Sigmoid colon (tissue), 7 donors: ENCODE measurements at regions of chr7 and their contacts with region 1.

Region 1: GRCh38 chr7:134778941-134779740 is at the start of gene CALD1:
- DNase-seq: peak; percentile 96
- H3K4me3 ChIP-seq: peak within 1 kb of the TSS; percentile 52 to 66 (median 66)
- H3K27ac ChIP-seq: peak within 1 kb of the TSS; percentile 91 to 94 (median 93)
- H3K4me1 ChIP-seq: peaks cover 0 to 39% (median 22%) of the 10 kb centered on the region in 4 donors
- H3K27me3 ChIP-seq: no peaks in the 10 kb centered on the region
- CTCF ChIP-seq: no peak
- EP300 ChIP-seq: peak; percentile 35 to 88 (median 80)
- POLR2A ChIP-seq: peak; percentile 84 to 97
- total RNA-seq, gene CALD1: 1,069 to 2,150 (median 1,500) TPM

Region 2: DNA sequence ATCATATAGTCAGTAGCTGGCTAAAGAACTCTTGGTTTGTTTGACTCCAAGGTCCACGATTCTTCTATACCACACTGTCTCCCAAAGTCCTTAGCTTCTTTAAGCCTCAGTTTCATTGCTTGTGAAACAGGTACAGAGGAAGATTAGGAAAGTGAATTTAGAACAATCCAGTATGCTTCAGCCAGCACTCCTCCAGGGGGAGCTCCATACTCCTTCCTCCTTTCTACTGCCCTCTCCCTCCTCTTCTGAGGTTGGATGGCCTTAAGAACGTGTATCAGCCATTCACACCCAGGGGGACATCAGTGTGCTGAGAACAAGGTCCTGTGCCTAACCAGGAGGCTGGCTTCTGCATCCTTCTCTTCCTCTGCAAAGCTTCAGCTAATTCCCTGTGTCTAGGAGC is 54.5 kb before region 1 on chr7:
- intact Hi-C with region 1: loop called (anchors 5 kb)
- DNase-seq: no peak
- H3K4me3 ChIP-seq: no peak overlapping the region
- H3K27ac ChIP-seq: peak overlapping the region; percentile 72 to 87 (median 78)
- H3K4me1 ChIP-seq: peaks cover 0 to 76% (median 64%) of the 10 kb centered on the region in 4 donors
- H3K27me3 ChIP-seq: no peaks in the 10 kb centered on the region
- CTCF ChIP-seq: peak in 1 of 4 experiments; percentile 32
- EP300 ChIP-seq: no peak
- POLR2A ChIP-seq: no peak

Region 3: GRCh38 chr7:134834689-134835462 is 55.7 kb after region 1 on chr7:
- intact Hi-C with region 1: loop called (anchors 2 kb)
- DNase-seq: peak; percentile 81
- H3K4me3 ChIP-seq: no peak overlapping the region
- H3K27ac ChIP-seq: peak overlapping the region; percentile 80 to 94 (median 83)
- H3K4me1 ChIP-seq: peaks cover 0 to 96% (median 77%) of the 10 kb centered on the region in 4 donors
- H3K27me3 ChIP-seq: no peaks in the 10 kb centered on the region
- CTCF ChIP-seq: no peak
- EP300 ChIP-seq: no peak
- POLR2A ChIP-seq: no peak

Region 4: DNA sequence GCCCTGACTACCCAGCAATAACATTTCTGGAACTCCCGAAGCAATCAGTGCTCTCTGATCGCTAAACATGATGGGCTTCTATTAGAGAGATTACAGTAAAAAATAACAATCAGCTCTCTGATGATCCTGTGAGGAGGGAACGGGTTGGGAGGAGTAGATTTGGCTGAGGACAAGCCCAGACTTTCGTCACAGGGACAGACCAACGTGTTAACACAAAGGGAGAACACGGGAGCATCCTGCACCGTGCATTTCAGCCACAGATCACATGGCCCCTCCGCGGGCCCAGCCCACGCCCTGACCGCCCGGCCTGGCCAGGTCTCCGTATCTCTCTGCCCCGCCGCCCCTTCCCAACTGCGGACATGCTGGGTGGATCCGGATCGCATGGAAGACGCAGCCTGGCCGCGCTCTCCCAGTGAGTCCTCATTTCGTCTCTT is 112.1 kb after region 1 on chr7:
- intact Hi-C with region 1: loop called (anchors 5 kb)
- DNase-seq: peak; percentile 94
- H3K4me3 ChIP-seq: peak overlapping the region; percentile 30 to 41 (median 40)
- H3K27ac ChIP-seq: peak overlapping the region; percentile 78 to 88 (median 80)
- H3K4me1 ChIP-seq: peaks cover 0 to 79% (median 66%) of the 10 kb centered on the region in 4 donors
- H3K27me3 ChIP-seq: no peaks in the 10 kb centered on the region
- CTCF ChIP-seq: no peak
- EP300 ChIP-seq: peak in 2 of 4 donors; percentile 50 to 56
- POLR2A ChIP-seq: no peak

Region 5: GRCh38 chr7:134932707-134933370 is 153.7 kb after region 1 on chr7:
- intact Hi-C with region 1: loop called (anchors 1 kb)
- DNase-seq: peak; percentile 82
- H3K4me3 ChIP-seq: peak overlapping the region in 1 of 4 donors; percentile 8
- H3K27ac ChIP-seq: peak overlapping the region; percentile 69 to 86 (median 84)
- H3K4me1 ChIP-seq: peaks cover 0 to 70% (median 40%) of the 10 kb centered on the region in 4 donors
- H3K27me3 ChIP-seq: no peaks in the 10 kb centered on the region
- CTCF ChIP-seq: no peak
- EP300 ChIP-seq: no peak
- POLR2A ChIP-seq: no peak

Region 6: GRCh38 chr7:134986363-134987251 is 207.5 kb after region 1 on chr7 and contains the start of gene AGBL3:
- intact Hi-C with region 1: loop called (anchors 2 kb)
- DNase-seq: peak; percentile 99
- H3K4me3 ChIP-seq: peak within 1 kb of the TSS; percentile 63 to 83 (median 73)
- H3K27ac ChIP-seq: peak within 1 kb of the TSS; percentile 89 to 93 (median 92)
- H3K4me1 ChIP-seq: peaks cover 0 to 18% (median 11%) of the 10 kb centered on the region in 4 donors
- H3K27me3 ChIP-seq: no peaks in the 10 kb centered on the region
- CTCF ChIP-seq: peak; percentile 55 to 75 (median 64)
- EP300 ChIP-seq: peak in 1 of 4 donors; percentile 50
- POLR2A ChIP-seq: peak in 1 of 2 donors; percentile 39
- total RNA-seq, gene AGBL3: 0.95 to 3.1 (median 1.1) TPM

Region 7: DNA sequence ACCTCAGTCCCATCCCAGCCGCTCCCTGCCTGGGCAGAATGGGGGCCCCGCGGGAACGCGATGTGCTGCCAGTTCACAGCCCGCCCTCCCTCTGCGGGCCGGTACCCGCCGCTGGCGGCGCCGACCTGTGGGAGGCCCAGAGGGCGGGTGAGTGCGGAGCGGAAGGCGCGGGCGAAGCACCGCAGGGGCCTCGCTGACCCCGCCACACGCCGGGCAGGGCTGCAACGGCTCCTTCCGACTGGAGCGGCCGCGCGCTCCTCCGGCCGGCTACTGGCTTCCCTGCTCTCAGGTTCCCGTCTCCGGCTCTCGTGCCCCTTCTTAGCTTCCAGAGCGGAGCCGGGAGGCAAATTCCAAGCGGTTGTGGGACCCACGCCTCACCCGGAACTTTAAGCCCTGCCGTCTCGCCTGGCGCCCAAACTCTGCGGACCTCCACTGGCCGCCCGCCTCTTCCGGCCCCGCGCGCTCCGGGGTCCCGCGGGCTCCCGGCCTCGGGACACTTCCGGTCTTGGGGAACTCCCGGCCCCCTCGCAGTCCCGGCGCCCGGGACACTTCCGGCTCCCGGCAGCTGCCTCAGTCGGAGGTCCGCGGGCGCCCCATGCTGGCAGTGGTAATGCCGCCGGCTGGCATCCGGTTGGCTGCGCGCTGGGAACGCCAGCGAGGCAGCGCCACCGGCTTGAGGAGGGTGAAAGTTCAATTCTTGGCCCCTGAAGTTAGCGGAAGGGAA is 391.3 kb after region 1 on chr7 and contains the start of gene CYREN:
- intact Hi-C with region 1: loop called (anchors 10 kb)
- DNase-seq: peak; percentile 97
- H3K4me3 ChIP-seq: peak within 1 kb of the TSS; percentile 61 to 92 (median 74)
- H3K27ac ChIP-seq: peak within 1 kb of the TSS; percentile 94 to 99 (median 96)
- H3K4me1 ChIP-seq: peaks cover 0 to 46% (median 38%) of the 10 kb centered on the region in 4 donors
- H3K27me3 ChIP-seq: no peaks in the 10 kb centered on the region
- CTCF ChIP-seq: peak; percentile 35 to 62 (median 44)
- EP300 ChIP-seq: no peak
- POLR2A ChIP-seq: peak in 1 of 2 donors; percentile 49
- total RNA-seq, gene CYREN: 27.5 to 31.9 (median 29.2) TPM